ENCODE measurements at regions of chr22 and their contacts with region 1.

Region 1: DNA sequence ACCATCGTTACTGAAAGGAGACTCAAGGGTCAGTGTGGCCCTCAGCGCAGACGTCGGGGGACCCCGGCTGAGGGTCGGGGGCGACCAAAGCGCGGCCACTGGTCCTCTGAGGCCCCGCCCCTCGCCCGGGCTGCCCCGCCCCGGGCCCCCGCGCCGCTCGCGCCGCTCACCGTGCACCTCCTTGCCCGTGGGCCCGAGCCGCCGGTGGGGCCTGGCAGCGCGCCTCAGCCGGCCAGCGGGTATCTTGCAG is 468 bp downstream of the ANKRD54 start:
- DNase-seq: peak in 1 of 5 donors; percentile 66
- H3K4me3 ChIP-seq: peak overlapping the region; percentile 29 to 77
- H3K4me3 Mint-ChIP-seq: peak overlapping the region; percentile 85 to 90 (median 88)
- H3K27ac ChIP-seq: peak overlapping the region; percentile 81
- H3K27ac Mint-ChIP-seq: peak overlapping the region; percentile 87 to 95 (median 91)
- H3K4me1 ChIP-seq: peaks cover 20% of the 10 kb centered on the region
- H3K4me1 Mint-ChIP-seq: peaks cover 15 to 35% (median 22%) of the 10 kb centered on the region in 4 donors
- H3K27me3 ChIP-seq: no peaks in the 10 kb centered on the region
- H3K27me3 Mint-ChIP-seq: no peaks in the 10 kb centered on the region

Region 2: DNA sequence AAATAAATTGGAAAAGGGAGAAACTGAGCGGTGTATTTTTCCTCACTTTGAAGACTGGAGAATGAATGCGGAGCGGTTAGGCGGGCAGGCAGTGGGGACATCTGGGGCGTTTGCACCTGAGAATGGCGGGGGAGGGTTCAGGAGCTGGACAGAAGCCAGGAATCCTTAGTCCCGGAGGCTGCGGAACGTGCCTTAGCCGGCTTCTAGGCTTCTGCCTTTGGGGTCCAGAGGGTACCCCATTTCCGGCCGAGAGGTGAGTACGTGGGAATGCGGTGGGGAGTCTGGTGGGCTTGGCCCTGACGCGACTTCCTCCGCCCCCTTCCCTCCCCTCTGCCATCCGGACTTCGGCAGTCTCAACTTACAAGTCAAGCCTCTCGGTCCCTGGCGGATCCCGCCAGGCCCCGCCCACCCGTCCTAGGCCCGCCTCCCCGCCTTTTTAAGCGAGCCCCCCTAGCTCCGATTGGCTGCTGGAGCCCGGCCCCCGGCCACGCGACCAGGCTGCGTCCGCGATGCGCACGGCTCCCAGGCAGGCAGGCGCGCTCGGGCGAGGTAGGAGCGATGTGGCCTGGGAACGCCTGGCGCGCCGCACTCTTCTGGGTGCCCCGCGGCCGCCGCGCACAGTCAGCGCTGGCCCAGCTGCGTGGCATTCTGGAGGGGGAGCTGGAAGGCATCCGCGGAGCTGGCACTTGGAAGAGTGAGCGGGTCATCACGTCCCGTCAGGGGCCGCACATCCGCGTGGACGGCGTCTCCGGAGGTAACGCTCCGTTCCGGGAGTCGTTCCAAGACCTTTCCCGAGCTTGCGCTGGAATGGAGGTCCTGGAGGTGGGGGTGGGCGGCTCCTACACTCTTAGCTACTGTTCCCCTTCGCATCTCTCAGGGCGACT is 36.0 kb before region 1 on chr22 and contains the start of gene GCAT:
- CTCF ChIA-PET with region 1: no interaction called
- POLR2A ChIA-PET with region 1: interaction called, 6 read pairs
- intact Hi-C with region 1: loop called (anchors 5 kb)
- DNase-seq: peak; percentile 70 to 82 (median 75)
- H3K4me3 ChIP-seq: peak within 1 kb of the TSS; percentile 36 to 45
- H3K4me3 Mint-ChIP-seq: peak within 1 kb of the TSS; percentile 69 to 87 (median 78)
- H3K27ac ChIP-seq: no peak within 1 kb of the TSS
- H3K27ac Mint-ChIP-seq: peak within 1 kb of the TSS in 4 of 7 donors; percentile 32 to 47 (median 45)
- H3K4me1 ChIP-seq: peaks cover 50% of the 10 kb centered on the region
- H3K4me1 Mint-ChIP-seq: peaks cover 17 to 50% (median 37%) of the 10 kb centered on the region in 4 donors
- H3K27me3 ChIP-seq: peaks cover 20% of the 10 kb centered on the region
- H3K27me3 Mint-ChIP-seq: peaks cover 30% of the 10 kb centered on the region in 2 donors
- total RNA-seq, gene GCAT: 3.4 to 4.4 TPM

Region 3: GRCh38 chr22:37855462-37855861 is 11.8 kb after region 1 on chr22:
- CTCF ChIA-PET with region 1: interaction called, 5 read pairs
- POLR2A ChIA-PET with region 1: interaction called, 11 read pairs
- intact Hi-C with region 1: no loop called
- DNase-seq: no peak
- H3K4me3 ChIP-seq: no peak overlapping the region
- H3K4me3 Mint-ChIP-seq: no peak overlapping the region
- H3K27ac ChIP-seq: no peak overlapping the region
- H3K27ac Mint-ChIP-seq: peak overlapping the region in 1 of 7 donors; percentile 30
- H3K4me1 ChIP-seq: peaks cover 14% of the 10 kb centered on the region
- H3K4me1 Mint-ChIP-seq: peaks cover 23 to 43% (median 31%) of the 10 kb centered on the region in 4 donors
- H3K27me3 ChIP-seq: no peaks in the 10 kb centered on the region
- H3K27me3 Mint-ChIP-seq: no peaks in the 10 kb centered on the region

Region 4: DNA sequence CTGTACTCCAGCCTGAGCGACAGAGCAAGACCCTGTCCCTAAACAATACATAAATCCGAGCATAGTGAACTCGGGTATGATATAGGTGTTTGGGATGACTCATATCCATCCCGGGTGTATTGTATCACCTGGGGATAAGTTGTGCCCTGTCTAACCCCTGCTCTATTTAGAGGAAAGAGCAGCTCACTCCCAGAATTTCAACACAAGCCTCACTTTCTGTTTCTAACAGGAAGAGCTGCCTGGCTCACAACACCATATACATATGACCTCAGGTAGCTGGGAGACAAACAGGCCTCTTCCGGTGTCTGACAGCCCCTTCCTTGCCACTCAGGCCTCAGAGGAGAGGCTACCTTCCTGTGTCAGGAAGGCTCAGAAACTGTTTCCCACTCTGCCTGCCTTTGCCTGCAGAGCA is 52.5 kb after region 1 on chr22:
- CTCF ChIA-PET with region 1: no interaction called
- POLR2A ChIA-PET with region 1: interaction called, 13 read pairs
- intact Hi-C with region 1: no loop called
- DNase-seq: peak; percentile 43 to 67 (median 50)
- H3K4me3 ChIP-seq: peak overlapping the region in 1 of 2 donors; percentile 4
- H3K4me3 Mint-ChIP-seq: peak overlapping the region; percentile 61 to 81 (median 70)
- H3K27ac ChIP-seq: peak overlapping the region; percentile 56
- H3K27ac Mint-ChIP-seq: peak overlapping the region; percentile 93 to 96 (median 95)
- H3K4me1 ChIP-seq: peaks cover 14% of the 10 kb centered on the region
- H3K4me1 Mint-ChIP-seq: peaks cover 16 to 35% (median 27%) of the 10 kb centered on the region in 4 donors
- H3K27me3 ChIP-seq: no peaks in the 10 kb centered on the region
- H3K27me3 Mint-ChIP-seq: no peaks in the 10 kb centered on the region

Region 5: GRCh38 chr22:37913233-37913721 is 69.6 kb after region 1 on chr22:
- CTCF ChIA-PET with region 1: no interaction called
- POLR2A ChIA-PET with region 1: no interaction called
- intact Hi-C with region 1: no loop called
- DNase-seq: no peak
- H3K4me3 ChIP-seq: no peak overlapping the region
- H3K4me3 Mint-ChIP-seq: no peak overlapping the region
- H3K27ac ChIP-seq: no peak overlapping the region
- H3K27ac Mint-ChIP-seq: peak overlapping the region in 2 of 7 donors; percentile 60
- H3K4me1 ChIP-seq: no peaks in the 10 kb centered on the region
- H3K4me1 Mint-ChIP-seq: peaks cover 6 to 36% (median 15%) of the 10 kb centered on the region in 4 donors
- H3K27me3 ChIP-seq: no peaks in the 10 kb centered on the region
- H3K27me3 Mint-ChIP-seq: no peaks in the 10 kb centered on the region

Measured in CD4-positive, alpha-beta memory T cell (primary cell).